WTC11 (cell line): ENCODE measurements at regions of chr2 and their contacts with region 1.

Region 1: DNA sequence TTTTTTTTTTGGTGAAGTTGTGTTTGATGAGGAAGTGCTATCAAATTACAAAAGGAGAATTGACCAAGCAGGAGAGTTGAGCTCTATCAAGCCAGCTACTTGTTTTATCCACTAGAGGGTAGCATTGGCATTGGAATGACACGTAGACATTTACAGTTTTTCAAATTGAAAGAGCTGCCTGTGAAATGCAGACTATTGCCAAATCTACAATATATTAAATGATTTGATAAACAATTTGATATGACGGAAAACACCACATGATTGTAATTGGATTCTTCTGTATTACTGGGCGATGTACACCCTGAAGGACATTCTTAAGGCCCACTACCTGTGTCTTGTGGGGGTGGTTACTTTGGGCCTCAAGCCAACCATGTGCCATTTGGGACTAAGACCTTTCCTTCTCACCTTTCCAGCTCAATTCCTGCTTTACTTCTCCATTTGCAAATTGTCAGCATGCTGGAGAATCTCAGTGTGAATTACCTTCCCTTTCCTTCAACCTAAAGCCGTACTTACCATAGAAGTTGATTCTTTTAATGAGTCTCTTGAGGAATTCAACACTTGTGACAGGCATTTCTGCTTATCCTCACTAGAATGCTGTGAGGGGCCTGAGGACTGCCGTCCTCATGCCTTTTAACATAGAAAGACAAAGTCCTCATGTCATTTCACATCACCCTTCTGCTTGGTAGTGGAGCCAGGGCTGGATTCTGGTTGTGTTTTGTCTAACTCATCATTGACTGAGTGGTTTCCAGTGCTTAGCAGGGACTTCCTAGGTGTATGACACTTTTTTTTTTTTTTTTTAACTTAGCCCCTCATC is 134.8 kb upstream of the THUMPD2 start:
- DNase-seq: no peak
- ATAC-seq: peak; percentile 78
- H3K4me3 Mint-ChIP-seq: no peak overlapping the region
- H3K27ac Mint-ChIP-seq: no peak overlapping the region
- H3K4me1 Mint-ChIP-seq: peaks cover 20% of the 10 kb centered on the region
- H3K27me3 Mint-ChIP-seq: no peaks in the 10 kb centered on the region; the same call in 1 of the 2 replicates
- CTCF ChIP-seq: peak; percentile 42; the same call in 1 of the 2 replicates

Region 2: DNA sequence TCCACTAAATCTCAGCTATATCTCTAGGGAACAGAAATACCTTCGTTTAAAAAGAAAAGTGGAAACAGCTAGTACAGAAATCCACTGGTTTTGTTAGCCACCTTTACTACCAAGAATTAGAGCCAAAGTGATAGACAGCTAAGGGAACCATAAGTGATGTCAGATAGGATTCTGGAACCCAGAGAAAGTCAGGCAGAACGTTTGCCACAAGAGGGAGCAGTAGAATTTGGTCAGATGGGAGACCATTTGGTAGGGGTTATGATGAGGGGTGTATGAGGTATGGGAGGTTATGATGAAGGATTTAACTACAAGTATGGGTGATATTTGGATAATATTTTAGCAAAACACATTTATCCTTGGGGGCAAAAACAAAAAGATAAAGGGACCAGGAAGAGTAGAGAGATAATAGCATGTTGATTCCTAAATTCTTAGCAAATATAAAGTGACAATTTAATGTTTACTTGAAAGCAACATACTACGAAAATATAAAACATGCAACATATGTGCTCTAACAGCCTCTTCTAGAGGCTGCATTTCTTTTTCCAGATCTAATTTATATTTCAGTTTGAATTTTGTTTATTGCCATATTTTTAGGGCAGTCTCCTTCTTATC is 534.7 kb after region 1 on chr2:
- CTCF ChIA-PET with region 1: interaction called, 16 read pairs
- POLR2A ChIA-PET with region 1: no interaction called
- DNase-seq: no peak
- ATAC-seq: peak; percentile 38; the same call in 1 of the 2 replicates
- H3K4me3 Mint-ChIP-seq: no peak overlapping the region
- H3K27ac Mint-ChIP-seq: no peak overlapping the region
- H3K4me1 Mint-ChIP-seq: peaks cover 31% of the 10 kb centered on the region
- H3K27me3 Mint-ChIP-seq: peaks cover 38% of the 10 kb centered on the region
- CTCF ChIP-seq: peak; percentile 31; the same call in 1 of the 2 replicates